CD4-positive, alpha-beta memory T cell (primary cell): ENCODE measurements at regions of chr7 and their contacts with region 1.

Region 1: GRCh38 chr7:87876040-87876868 is at the starts of genes DBF4 and SLC25A40:
- DNase-seq: peak; percentile 91 to 96 (median 95)
- H3K4me3 ChIP-seq: peak within 1 kb of the TSS; percentile 79 to 80
- H3K4me3 Mint-ChIP-seq: peak within 1 kb of the TSS; percentile 93 to 97 (median 95)
- H3K27ac ChIP-seq: peak within 1 kb of the TSS; percentile 91
- H3K27ac Mint-ChIP-seq: peak within 1 kb of the TSS; percentile 71 to 99 (median 97)
- H3K4me1 ChIP-seq: peaks cover 43% of the 10 kb centered on the region
- H3K4me1 Mint-ChIP-seq: peaks cover 37 to 58% (median 46%) of the 10 kb centered on the region in 4 donors
- H3K27me3 ChIP-seq: no peaks in the 10 kb centered on the region
- H3K27me3 Mint-ChIP-seq: no peaks in the 10 kb centered on the region
- total RNA-seq, gene DBF4: 25.3 to 29.0 TPM
- total RNA-seq, gene SLC25A40: 28.9 to 29.8 TPM

Region 2: GRCh38 chr7:87345166-87345927 is 530.9 kb before region 1 on chr7 and contains the start of gene CROT:
- CTCF ChIA-PET with region 1: no interaction called
- POLR2A ChIA-PET with region 1: interaction called, 6 read pairs
- intact Hi-C with region 1: loop called (anchors 1 kb)
- DNase-seq: peak; percentile 91 to 94 (median 92)
- H3K4me3 ChIP-seq: peak within 1 kb of the TSS; percentile 13 to 73
- H3K4me3 Mint-ChIP-seq: peak within 1 kb of the TSS; percentile 89 to 97 (median 96)
- H3K27ac ChIP-seq: peak within 1 kb of the TSS; percentile 80
- H3K27ac Mint-ChIP-seq: peak within 1 kb of the TSS; percentile 94 to 98 (median 95)
- H3K4me1 ChIP-seq: peaks cover 44% of the 10 kb centered on the region
- H3K4me1 Mint-ChIP-seq: peaks cover 33 to 57% (median 46%) of the 10 kb centered on the region in 4 donors
- H3K27me3 ChIP-seq: no peaks in the 10 kb centered on the region
- H3K27me3 Mint-ChIP-seq: no peaks in the 10 kb centered on the region
- total RNA-seq, gene CROT: 17.8 to 19.0 TPM

Region 3: DNA sequence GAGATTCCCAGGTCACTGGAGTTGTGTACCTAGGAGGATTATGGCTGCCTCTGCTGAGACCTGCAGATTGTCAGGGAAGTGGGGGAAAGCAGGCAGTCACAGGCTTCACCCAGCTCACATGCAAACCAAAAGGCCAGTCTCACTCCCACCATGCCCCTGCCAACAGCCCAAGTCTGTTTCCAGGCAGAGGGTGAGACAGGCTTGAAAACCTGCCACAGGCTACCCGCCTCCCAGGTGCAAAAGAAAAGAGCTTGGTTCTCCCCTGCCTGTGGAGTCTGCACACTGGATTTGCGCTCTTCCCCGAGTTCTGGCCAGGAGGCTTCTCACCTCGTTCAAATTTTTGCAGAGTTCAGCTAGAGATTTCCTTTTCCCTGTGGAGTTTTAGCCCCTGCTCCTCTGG is 128.6 kb before region 1 on chr7:
- CTCF ChIA-PET with region 1: no interaction called
- POLR2A ChIA-PET with region 1: no interaction called
- intact Hi-C with region 1: no loop called
- DNase-seq: no peak
- H3K4me3 ChIP-seq: no peak overlapping the region
- H3K4me3 Mint-ChIP-seq: no peak overlapping the region
- H3K27ac ChIP-seq: no peak overlapping the region
- H3K27ac Mint-ChIP-seq: no peak overlapping the region
- H3K4me1 ChIP-seq: no peaks in the 10 kb centered on the region
- H3K4me1 Mint-ChIP-seq: no peaks in the 10 kb centered on the region
- H3K27me3 ChIP-seq: no peaks in the 10 kb centered on the region
- H3K27me3 Mint-ChIP-seq: peaks cover 3 to 4% of the 10 kb centered on the region in 2 donors

Region 4: DNA sequence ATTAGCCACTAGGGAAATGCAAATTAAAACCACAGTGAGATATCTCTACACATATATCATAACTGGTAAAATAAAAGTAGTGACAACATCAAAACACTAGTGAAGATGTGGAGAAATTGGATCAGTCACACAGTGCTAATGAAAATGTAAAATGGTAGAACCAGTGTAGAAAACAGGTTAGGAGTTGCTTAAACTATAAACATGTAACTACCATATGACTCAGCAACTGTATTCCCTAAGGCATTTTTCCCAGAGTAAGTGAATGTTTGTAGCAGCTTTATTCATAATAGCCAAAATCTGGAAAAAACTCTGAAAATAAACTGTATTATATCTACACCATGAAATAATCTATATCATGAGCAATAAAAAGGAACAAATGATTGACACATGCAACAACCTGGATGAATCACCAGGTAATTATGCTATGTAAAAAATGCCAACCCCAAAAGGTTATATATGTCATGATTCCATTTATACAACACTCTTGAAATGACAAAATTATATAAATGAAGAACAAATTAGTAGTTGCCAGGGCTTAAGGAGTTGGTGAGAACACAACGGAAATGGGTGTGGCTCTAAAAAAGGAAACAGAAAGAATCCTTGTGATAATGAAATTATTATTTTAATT is 22.9 kb before region 1 on chr7:
- CTCF ChIA-PET with region 1: no interaction called
- POLR2A ChIA-PET with region 1: interaction called, 3 read pairs
- intact Hi-C with region 1: loop called (anchors 2 kb)
- DNase-seq: no peak
- H3K4me3 ChIP-seq: no peak overlapping the region
- H3K4me3 Mint-ChIP-seq: no peak overlapping the region
- H3K27ac ChIP-seq: no peak overlapping the region
- H3K27ac Mint-ChIP-seq: no peak overlapping the region
- H3K4me1 ChIP-seq: peaks cover 8% of the 10 kb centered on the region
- H3K4me1 Mint-ChIP-seq: peaks cover 0 to 11% (median 3%) of the 10 kb centered on the region in 4 donors
- H3K27me3 ChIP-seq: no peaks in the 10 kb centered on the region
- H3K27me3 Mint-ChIP-seq: no peaks in the 10 kb centered on the region

Region 5: GRCh38 chr7:87933945-87934698 is 57.9 kb after region 1 on chr7 and contains the start of gene ADAM22:
- CTCF ChIA-PET with region 1: interaction called, 4 read pairs
- POLR2A ChIA-PET with region 1: interaction called, 22 read pairs
- intact Hi-C with region 1: loop called (anchors 1 kb)
- DNase-seq: peak; percentile 80 to 84 (median 81)
- H3K4me3 ChIP-seq: peak within 1 kb of the TSS; percentile 52 to 64
- H3K4me3 Mint-ChIP-seq: peak within 1 kb of the TSS; percentile 88 to 93 (median 92)
- H3K27ac ChIP-seq: peak within 1 kb of the TSS; percentile 15
- H3K27ac Mint-ChIP-seq: peak within 1 kb of the TSS; percentile 55 to 85 (median 74)
- H3K4me1 ChIP-seq: peaks cover 13% of the 10 kb centered on the region
- H3K4me1 Mint-ChIP-seq: peaks cover 10 to 20% (median 12%) of the 10 kb centered on the region in 4 donors
- H3K27me3 ChIP-seq: no peaks in the 10 kb centered on the region
- H3K27me3 Mint-ChIP-seq: no peaks in the 10 kb centered on the region
- total RNA-seq, gene ADAM22: 5.2 to 7.7 TPM

Region 6: DNA sequence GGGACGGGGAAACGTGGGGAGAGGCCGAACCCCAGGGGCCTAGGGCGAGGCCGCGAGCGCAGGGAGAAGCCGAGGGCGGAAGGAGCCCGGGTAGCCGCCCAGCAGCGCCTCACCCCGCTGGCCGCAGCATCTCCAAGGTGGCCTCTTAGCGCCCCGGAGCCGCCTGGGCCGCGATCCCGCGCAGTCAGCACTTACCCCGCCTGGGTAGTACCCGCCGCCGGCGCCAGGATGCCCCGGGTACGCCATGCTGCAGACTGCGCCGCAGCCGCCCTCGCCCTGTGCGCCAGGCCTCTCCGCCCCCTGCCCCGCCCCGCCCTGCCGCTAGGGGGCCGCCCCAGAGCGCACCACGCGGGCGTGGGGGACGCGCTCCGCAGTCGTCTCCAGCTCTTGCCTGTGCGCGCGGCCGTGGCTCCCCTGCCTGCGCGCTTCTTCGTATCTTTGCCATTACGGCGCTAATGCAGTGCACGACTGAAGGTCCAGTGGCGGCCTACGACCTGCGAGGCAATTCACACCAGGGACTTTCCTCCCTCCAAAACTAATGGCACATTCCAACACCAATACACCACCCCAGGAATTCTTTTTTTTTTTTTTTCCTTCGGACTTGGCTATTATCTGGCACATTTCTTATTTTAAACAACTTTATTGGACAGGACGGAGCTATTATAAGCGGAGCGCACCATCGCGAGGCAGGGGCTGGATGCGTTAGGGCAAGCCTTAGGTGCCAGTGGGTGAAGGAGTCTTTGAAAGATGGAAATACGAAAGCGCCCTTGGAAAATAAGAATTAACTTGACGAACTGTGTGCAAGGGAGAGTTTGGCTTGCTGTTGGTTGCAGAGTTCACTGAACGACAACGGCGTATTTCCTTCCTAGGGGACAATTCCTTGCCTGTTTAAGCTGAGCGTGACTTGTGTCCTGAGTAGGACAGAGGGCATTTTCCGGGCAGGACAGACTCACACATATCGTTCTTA is 343.8 kb after region 1 on chr7 and contains the start of gene SRI:
- CTCF ChIA-PET with region 1: interaction called, 3 read pairs
- POLR2A ChIA-PET with region 1: interaction called, 3 read pairs
- intact Hi-C with region 1: loop called (anchors 2 kb)
- DNase-seq: peak; percentile 89 to 95 (median 93)
- H3K4me3 ChIP-seq: peak within 1 kb of the TSS; percentile 76 to 77
- H3K4me3 Mint-ChIP-seq: peak within 1 kb of the TSS; percentile 91 to 98 (median 96)
- H3K27ac ChIP-seq: peak within 1 kb of the TSS; percentile 76
- H3K27ac Mint-ChIP-seq: peak within 1 kb of the TSS; percentile 86 to 99 (median 95)
- H3K4me1 ChIP-seq: peaks cover 23% of the 10 kb centered on the region
- H3K4me1 Mint-ChIP-seq: peaks cover 25 to 46% (median 31%) of the 10 kb centered on the region in 4 donors
- H3K27me3 ChIP-seq: no peaks in the 10 kb centered on the region
- H3K27me3 Mint-ChIP-seq: peaks cover 0 to 4% of the 10 kb centered on the region in 2 donors
- total RNA-seq, gene SRI: 76.1 to 80.0 TPM